GM12878 (cell line): ENCODE measurements at regions of chr4 and their contacts with region 1.

Region 1: GRCh38 chr4:174873931-174874330 is 44.2 kb upstream of the ADAM29 start:
- DNase-seq: peak; percentile 25
- ATAC-seq: peak; percentile 95
- H3K4me3 ChIP-seq: no peak overlapping the region
- H3K27ac ChIP-seq: no peak overlapping the region
- H3K4me1 ChIP-seq: no peaks in the 10 kb centered on the region
- H3K27me3 ChIP-seq: no peaks in the 10 kb centered on the region
- CTCF ChIP-seq: peak; percentile 33 to 64 (median 42); a peak in 4 of 6 replicates
- EP300 ChIP-seq: no peak
- POLR2A ChIP-seq: no peak
- RAD21 ChIP-seq: peak; percentile 56

Region 2: GRCh38 chr4:174928174-174928573 is 54.2 kb after region 1 on chr4:
- CTCF ChIA-PET with region 1: interaction called, 7 read pairs
- POLR2A ChIA-PET with region 1: no interaction called
- RAD21 ChIA-PET with region 1: interaction called, 4 read pairs
- SMC1A ChIA-PET with region 1: interaction called, 18 read pairs
- in situ Hi-C with region 1: no loop called
- intact Hi-C with region 1: loop called (anchors 2 kb)
- DNase-seq: peak; percentile 89
- ATAC-seq: peak; percentile 82
- H3K4me3 ChIP-seq: no peak overlapping the region
- H3K27ac ChIP-seq: peak overlapping the region; percentile 89
- H3K4me1 ChIP-seq: peaks cover 13% of the 10 kb centered on the region
- H3K27me3 ChIP-seq: no peaks in the 10 kb centered on the region
- CTCF ChIP-seq: no peak
- EP300 ChIP-seq: peak; percentile 63 to 97
- POLR2A ChIP-seq: no peak
- RAD21 ChIP-seq: no peak

Region 3: DNA sequence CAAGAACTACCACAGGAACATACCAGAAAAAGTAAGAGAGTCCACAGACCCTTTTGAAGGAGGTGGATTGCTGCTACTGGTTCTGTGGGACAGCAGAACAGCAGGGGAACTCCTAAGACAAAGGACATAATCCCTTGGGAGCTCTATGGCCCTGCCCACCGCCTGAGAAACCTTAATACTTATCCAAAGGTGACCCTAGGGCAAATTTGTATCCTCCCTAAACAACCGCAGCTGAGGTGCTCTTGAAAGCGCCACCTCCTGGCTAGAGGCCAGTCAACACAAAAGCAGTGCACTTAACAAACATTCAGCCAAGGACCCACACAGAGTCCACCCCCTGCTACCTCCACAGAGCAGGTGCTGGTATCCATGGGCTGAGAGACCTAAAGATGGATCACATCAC is 181.0 kb after region 1 on chr4:
- CTCF ChIA-PET with region 1: interaction called, 48 read pairs
- POLR2A ChIA-PET with region 1: interaction called, 3 read pairs
- RAD21 ChIA-PET with region 1: interaction called, 5 read pairs
- SMC1A ChIA-PET with region 1: interaction called, 21 read pairs
- in situ Hi-C with region 1: no loop called
- intact Hi-C with region 1: loop called (anchors 1 kb)
- DNase-seq: no peak
- ATAC-seq: peak; percentile 98
- H3K4me3 ChIP-seq: no peak overlapping the region
- H3K27ac ChIP-seq: no peak overlapping the region
- H3K4me1 ChIP-seq: no peaks in the 10 kb centered on the region
- H3K27me3 ChIP-seq: no peaks in the 10 kb centered on the region
- CTCF ChIP-seq: peak in 2 of 3 experiments; percentile 37 to 60; a peak in 4 of 6 replicates
- EP300 ChIP-seq: no peak
- POLR2A ChIP-seq: no peak
- RAD21 ChIP-seq: peak; percentile 29; the same call in 1 of the 2 replicates

Region 4: DNA sequence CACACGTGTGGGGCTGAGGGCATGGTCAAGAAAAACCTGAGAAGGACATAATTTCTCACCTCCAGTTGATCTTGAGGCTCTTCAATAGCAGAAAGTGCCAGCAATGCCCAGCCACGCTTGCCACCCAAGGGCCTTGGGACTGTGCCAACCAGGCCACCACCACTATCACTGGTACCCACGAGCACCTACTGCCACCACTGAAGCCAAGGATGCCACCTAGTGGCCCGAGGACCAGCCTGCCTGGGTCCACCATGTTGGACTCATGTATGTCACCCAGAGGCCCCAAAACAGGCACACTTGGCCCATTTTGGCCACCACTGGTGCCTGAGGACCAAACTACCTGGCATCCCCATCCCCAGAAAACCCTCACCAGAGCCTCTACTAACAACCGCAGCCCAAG is 236.0 kb after region 1 on chr4:
- CTCF ChIA-PET with region 1: interaction called, 3 read pairs
- POLR2A ChIA-PET with region 1: no interaction called
- RAD21 ChIA-PET with region 1: interaction called, 4 read pairs
- SMC1A ChIA-PET with region 1: interaction called, 6 read pairs
- in situ Hi-C with region 1: no loop called
- intact Hi-C with region 1: loop called (anchors 1 kb)
- DNase-seq: peak; percentile 8
- ATAC-seq: peak; percentile 99
- H3K4me3 ChIP-seq: no peak overlapping the region
- H3K27ac ChIP-seq: no peak overlapping the region
- H3K4me1 ChIP-seq: no peaks in the 10 kb centered on the region
- H3K27me3 ChIP-seq: no peaks in the 10 kb centered on the region
- CTCF ChIP-seq: peak; percentile 38 to 81 (median 47)
- EP300 ChIP-seq: no peak
- POLR2A ChIP-seq: no peak
- RAD21 ChIP-seq: peak; percentile 20; the same call in 1 of the 2 replicates

Region 5: GRCh38 chr4:175253184-175253902 is 379.4 kb after region 1 on chr4:
- CTCF ChIA-PET with region 1: interaction called, 4 read pairs
- POLR2A ChIA-PET with region 1: no interaction called
- RAD21 ChIA-PET with region 1: interaction called, 3 read pairs
- SMC1A ChIA-PET with region 1: interaction called, 3 read pairs
- in situ Hi-C with region 1: no loop called
- intact Hi-C with region 1: loop called (anchors 5 kb)
- DNase-seq: no peak
- ATAC-seq: peak; percentile 78
- H3K4me3 ChIP-seq: no peak overlapping the region
- H3K27ac ChIP-seq: no peak overlapping the region
- H3K4me1 ChIP-seq: no peaks in the 10 kb centered on the region
- H3K27me3 ChIP-seq: no peaks in the 10 kb centered on the region
- CTCF ChIP-seq: peak; percentile 22 to 35 (median 33); a peak in 3 of 6 replicates
- EP300 ChIP-seq: no peak
- POLR2A ChIP-seq: no peak
- RAD21 ChIP-seq: peak; percentile 34

Region 6: DNA sequence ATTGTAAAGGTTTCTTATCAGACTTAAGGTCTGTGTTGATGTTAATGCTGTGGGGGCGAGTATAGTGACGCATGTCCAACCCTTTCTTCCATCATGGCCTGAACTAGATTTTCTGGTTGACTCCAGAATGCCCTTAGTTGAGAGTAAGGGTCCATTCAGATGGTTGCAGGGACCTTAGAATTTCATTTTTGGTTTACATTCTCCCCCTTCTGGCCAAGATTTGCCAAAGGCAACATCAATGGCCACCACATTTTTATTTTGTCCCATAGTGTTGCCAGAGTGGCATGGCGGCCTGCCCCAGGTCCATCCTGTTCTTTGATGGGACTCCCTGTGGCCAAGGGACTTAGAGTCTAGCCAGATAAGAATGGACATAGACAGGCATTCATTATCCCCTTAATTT is 569.6 kb after region 1 on chr4:
- CTCF ChIA-PET with region 1: no interaction called
- POLR2A ChIA-PET with region 1: no interaction called
- RAD21 ChIA-PET with region 1: no interaction called
- SMC1A ChIA-PET with region 1: no interaction called
- in situ Hi-C with region 1: no loop called
- intact Hi-C with region 1: loop called (anchors 5 kb)
- DNase-seq: no peak
- ATAC-seq: no peak
- H3K4me3 ChIP-seq: no peak overlapping the region
- H3K27ac ChIP-seq: no peak overlapping the region
- H3K4me1 ChIP-seq: no peaks in the 10 kb centered on the region
- H3K27me3 ChIP-seq: no peaks in the 10 kb centered on the region
- CTCF ChIP-seq: no peak
- EP300 ChIP-seq: no peak
- POLR2A ChIP-seq: no peak
- RAD21 ChIP-seq: no peak

Region 7: GRCh38 chr4:175536852-175537453 is 663.0 kb after region 1 on chr4:
- CTCF ChIA-PET with region 1: interaction called, 7 read pairs
- POLR2A ChIA-PET with region 1: no interaction called
- RAD21 ChIA-PET with region 1: no interaction called
- SMC1A ChIA-PET with region 1: interaction called, 15 read pairs
- in situ Hi-C with region 1: loop called (anchors 25 kb)
- intact Hi-C with region 1: loop called (anchors 1 kb)
- DNase-seq: peak; percentile 7
- ATAC-seq: peak; percentile 72
- H3K4me3 ChIP-seq: no peak overlapping the region
- H3K27ac ChIP-seq: no peak overlapping the region
- H3K4me1 ChIP-seq: no peaks in the 10 kb centered on the region
- H3K27me3 ChIP-seq: no peaks in the 10 kb centered on the region
- CTCF ChIP-seq: peak; percentile 37 to 48 (median 44); a peak in 5 of 6 replicates
- EP300 ChIP-seq: no peak
- POLR2A ChIP-seq: no peak
- RAD21 ChIP-seq: peak; percentile 56

Region 8: DNA sequence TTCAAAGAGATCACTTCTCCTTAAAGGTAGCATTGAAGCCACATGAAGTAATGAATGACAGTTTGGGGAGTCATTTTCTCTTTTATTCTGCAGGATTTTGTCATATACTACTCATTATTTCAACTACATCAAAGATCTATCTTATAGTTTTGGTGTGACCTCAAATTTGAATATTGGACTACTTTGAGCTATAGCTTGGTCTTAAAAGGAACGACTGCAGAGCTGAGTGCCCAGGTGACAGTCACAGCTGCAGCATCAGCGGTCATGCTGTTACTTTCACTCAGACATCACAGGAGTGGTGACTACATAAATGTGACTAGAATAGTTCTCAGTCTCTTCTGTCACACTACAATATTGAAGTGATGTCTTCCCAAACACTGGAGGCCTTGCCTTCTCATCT is 1435.1 kb after region 1 on chr4:
- CTCF ChIA-PET with region 1: no interaction called
- POLR2A ChIA-PET with region 1: no interaction called
- RAD21 ChIA-PET with region 1: no interaction called
- SMC1A ChIA-PET with region 1: no interaction called
- in situ Hi-C with region 1: no loop called
- intact Hi-C with region 1: no loop called
- DNase-seq: no peak
- ATAC-seq: peak; percentile 98
- H3K4me3 ChIP-seq: no peak overlapping the region
- H3K27ac ChIP-seq: no peak overlapping the region
- H3K4me1 ChIP-seq: peaks cover 17% of the 10 kb centered on the region
- H3K27me3 ChIP-seq: no peaks in the 10 kb centered on the region
- CTCF ChIP-seq: no peak
- EP300 ChIP-seq: peak; percentile 13 to 32; a peak in 1 of 4 replicates
- POLR2A ChIP-seq: no peak
- RAD21 ChIP-seq: no peak